ENCODE measurements at regions of chr1 and their contacts with region 1.

Region 1: GRCh38 chr1:241611063-241611462 is 29.1 kb downstream of the CHML start:
- DNase-seq: peak; percentile 38
- CTCF ChIP-seq: peak; percentile 59

Region 2: GRCh38 chr1:242017584-242018233 is 406.6 kb after region 1 on chr1:
- in situ Hi-C with region 1: loop called (anchors 25 kb)
- DNase-seq: peak; percentile 73
- CTCF ChIP-seq: peak; percentile 75

Measured in GM13977 (cell line).